GM12878 (cell line): ENCODE measurements at regions of chr17 and their contacts with region 1.

Region 1: DNA sequence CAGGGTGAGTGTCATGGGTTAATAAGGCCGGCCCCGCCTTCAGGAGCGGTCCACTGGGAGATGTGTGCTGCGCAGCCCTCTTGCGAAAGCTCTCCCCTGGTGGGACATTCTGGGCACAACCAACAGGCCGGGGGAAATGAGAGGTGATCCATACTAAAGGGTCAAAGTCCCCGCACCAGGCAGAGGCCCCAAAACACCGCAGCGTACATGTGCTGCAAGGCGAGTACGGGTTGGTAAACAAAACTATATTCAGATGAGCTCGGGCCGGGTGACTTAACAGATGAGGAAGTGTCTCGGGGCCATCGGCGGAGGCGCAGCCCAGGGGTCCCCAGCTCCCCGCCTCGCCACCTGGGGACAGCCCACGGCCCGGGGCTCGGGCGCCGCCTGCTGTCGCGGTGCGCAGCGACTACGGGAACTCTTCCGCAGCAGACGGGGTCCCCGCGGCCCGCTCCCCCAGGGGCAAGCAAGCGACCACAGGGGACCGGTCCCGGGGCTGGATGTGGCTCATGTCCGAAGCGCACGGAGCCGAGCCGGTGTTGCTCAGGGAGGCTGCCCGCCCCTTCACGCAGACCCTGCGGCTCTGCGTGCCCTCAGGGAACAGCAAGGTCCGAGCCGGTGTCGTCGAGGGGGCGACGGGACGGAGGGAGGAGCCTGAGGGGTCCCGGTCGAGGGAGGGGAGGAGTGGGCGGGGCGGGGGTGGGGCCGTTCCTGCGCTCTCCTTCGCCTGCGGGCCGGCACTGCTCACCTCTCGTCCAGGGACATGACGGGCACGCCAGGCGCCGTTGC is at the start of gene RAB37:
- DNase-seq: no peak
- ATAC-seq: peak; percentile 67
- H3K4me3 ChIP-seq: peak within 1 kb of the TSS; percentile 69
- H3K27ac ChIP-seq: peak within 1 kb of the TSS; percentile 47
- H3K4me1 ChIP-seq: peaks cover 32% of the 10 kb centered on the region
- H3K27me3 ChIP-seq: no peaks in the 10 kb centered on the region
- CTCF ChIP-seq: peak; percentile 64 to 76 (median 67); a peak in 5 of 6 replicates
- EP300 ChIP-seq: no peak
- POLR2A ChIP-seq: peak; percentile 31; the same call in 1 of the 2 replicates
- RAD21 ChIP-seq: peak; percentile 76
- polyA plus RNA-seq, gene RAB37: 0.48 to 0.97 TPM

Region 2: GRCh38 chr17:74566132-74566753 is 170.5 kb before region 1 on chr17:
- CTCF ChIA-PET with region 1: interaction called, 28 read pairs
- POLR2A ChIA-PET with region 1: no interaction called
- RAD21 ChIA-PET with region 1: interaction called, 5 read pairs
- SMC1A ChIA-PET with region 1: interaction called, 11 read pairs
- in situ Hi-C with region 1: no loop called
- intact Hi-C with region 1: loop called (anchors 2 kb)
- DNase-seq: no peak
- ATAC-seq: peak; percentile 86
- H3K4me3 ChIP-seq: no peak overlapping the region
- H3K27ac ChIP-seq: no peak overlapping the region
- H3K4me1 ChIP-seq: no peaks in the 10 kb centered on the region
- H3K27me3 ChIP-seq: peaks cover 1 to 3% of the 10 kb centered on the region in 2 experiments; a peak in 3 of 4 replicates
- CTCF ChIP-seq: peak; percentile 66 to 78 (median 74)
- EP300 ChIP-seq: no peak
- POLR2A ChIP-seq: no peak
- RAD21 ChIP-seq: peak; percentile 71

Region 3: DNA sequence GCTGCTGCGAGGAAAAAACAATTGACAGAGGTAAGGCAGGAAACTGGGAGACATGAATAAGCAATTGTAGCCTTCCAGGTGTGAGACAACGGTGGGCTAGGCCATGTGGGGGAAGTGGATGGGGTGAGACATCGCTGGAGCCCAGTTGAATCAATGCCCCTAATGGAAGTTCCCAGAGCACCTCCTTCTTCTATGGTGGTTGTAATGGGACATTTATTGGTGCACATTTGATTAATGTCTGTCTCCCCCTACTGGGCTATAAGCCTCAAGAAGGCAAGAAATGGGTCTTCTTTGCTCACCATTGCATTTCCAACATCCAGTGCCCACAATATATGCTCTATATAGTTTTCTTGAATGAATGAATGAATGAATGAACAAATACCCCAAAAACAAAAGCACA is 90.5 kb before region 1 on chr17:
- CTCF ChIA-PET with region 1: interaction called, 13 read pairs
- POLR2A ChIA-PET with region 1: interaction called, 6 read pairs
- RAD21 ChIA-PET with region 1: interaction called, 9 read pairs
- SMC1A ChIA-PET with region 1: interaction called, 5 read pairs
- in situ Hi-C with region 1: no loop called
- intact Hi-C with region 1: no loop called
- DNase-seq: no peak
- ATAC-seq: peak; percentile 59
- H3K4me3 ChIP-seq: no peak overlapping the region
- H3K27ac ChIP-seq: no peak overlapping the region
- H3K4me1 ChIP-seq: peaks cover 10% of the 10 kb centered on the region
- H3K27me3 ChIP-seq: peaks cover 0 to 5% of the 10 kb centered on the region in 2 experiments; a peak in 2 of 4 replicates
- CTCF ChIP-seq: peak; percentile 46 to 68 (median 50); a peak in 5 of 6 replicates
- EP300 ChIP-seq: no peak
- POLR2A ChIP-seq: no peak
- RAD21 ChIP-seq: peak; percentile 64

Region 4: GRCh38 chr17:74697515-74697914 is 39.2 kb before region 1 on chr17:
- CTCF ChIA-PET with region 1: interaction called, 6 read pairs
- POLR2A ChIA-PET with region 1: no interaction called
- RAD21 ChIA-PET with region 1: interaction called, 16 read pairs
- SMC1A ChIA-PET with region 1: interaction called, 5 read pairs
- in situ Hi-C with region 1: no loop called
- intact Hi-C with region 1: no loop called
- DNase-seq: peak; percentile 25
- ATAC-seq: peak; percentile 59
- H3K4me3 ChIP-seq: no peak overlapping the region
- H3K27ac ChIP-seq: peak overlapping the region; percentile 50
- H3K4me1 ChIP-seq: peaks cover 19% of the 10 kb centered on the region
- H3K27me3 ChIP-seq: no peaks in the 10 kb centered on the region; a peak in 1 of 4 replicates
- CTCF ChIP-seq: no peak
- EP300 ChIP-seq: no peak
- POLR2A ChIP-seq: no peak
- RAD21 ChIP-seq: no peak

Region 5: DNA sequence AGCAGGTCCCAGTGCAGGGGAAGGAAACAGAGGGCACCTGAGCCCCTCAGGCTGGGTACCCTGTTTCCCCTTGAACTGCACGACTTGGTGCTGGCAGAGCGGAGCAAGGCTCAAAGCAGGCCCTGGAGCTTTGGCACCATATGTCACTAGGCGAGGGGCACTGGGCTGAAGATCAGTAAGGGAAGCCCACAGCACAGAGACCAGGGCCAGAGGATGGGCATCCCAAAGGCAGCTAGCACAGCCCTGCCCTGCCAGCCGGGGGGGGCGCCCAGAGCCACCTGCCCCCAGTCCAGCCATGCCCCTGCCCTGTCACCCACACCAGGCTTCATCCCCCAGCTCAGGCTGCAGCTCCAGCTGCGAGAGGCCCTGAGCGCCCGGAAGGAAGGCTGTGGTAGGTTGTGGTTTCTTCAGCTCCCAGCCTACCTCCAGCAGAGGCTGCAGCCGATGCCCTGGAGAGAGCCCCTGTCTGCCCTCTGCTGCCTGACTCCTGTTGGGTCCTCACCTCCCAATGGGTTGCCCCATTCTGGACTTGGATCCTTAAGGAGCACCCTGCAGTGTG is 22.6 kb after region 1 on chr17:
- CTCF ChIA-PET with region 1: interaction called, 20 read pairs
- POLR2A ChIA-PET with region 1: interaction called, 3 read pairs
- RAD21 ChIA-PET with region 1: interaction called, 11 read pairs
- SMC1A ChIA-PET with region 1: interaction called, 12 read pairs
- in situ Hi-C with region 1: no loop called
- intact Hi-C with region 1: no loop called
- DNase-seq: no peak
- ATAC-seq: peak; percentile 90
- H3K4me3 ChIP-seq: no peak overlapping the region
- H3K27ac ChIP-seq: peak overlapping the region; percentile 1
- H3K4me1 ChIP-seq: peaks cover 21% of the 10 kb centered on the region
- H3K27me3 ChIP-seq: no peaks in the 10 kb centered on the region
- CTCF ChIP-seq: peak; percentile 16 to 32 (median 30); a peak in 3 of 6 replicates
- EP300 ChIP-seq: no peak
- POLR2A ChIP-seq: no peak
- RAD21 ChIP-seq: peak; percentile 28

Region 6: DNA sequence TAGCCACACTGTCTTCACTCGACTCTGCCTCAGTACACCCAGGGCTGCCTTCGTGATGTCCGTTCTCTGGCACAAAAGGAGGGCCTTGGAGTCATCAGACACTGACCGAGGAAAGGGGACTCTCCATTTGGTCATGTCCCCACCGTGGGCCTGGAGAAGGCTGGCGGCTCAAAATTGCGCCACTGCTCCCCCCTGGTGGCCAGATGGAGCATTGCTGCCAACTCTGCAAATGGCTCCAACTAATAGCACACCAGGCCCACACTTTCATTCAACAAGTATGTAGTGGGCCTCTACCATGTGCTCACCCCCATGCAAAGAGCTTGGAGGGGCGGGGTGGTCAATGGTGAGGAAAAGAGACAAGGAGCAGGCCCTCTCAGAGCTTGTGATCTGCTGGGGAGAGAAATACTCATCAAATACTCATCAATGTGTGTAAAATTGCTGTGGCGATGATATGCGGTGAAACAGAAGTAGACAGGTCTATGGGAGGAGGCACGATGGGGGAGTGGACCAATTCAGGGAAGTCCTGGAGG is 128.2 kb after region 1 on chr17:
- CTCF ChIA-PET with region 1: interaction called, 16 read pairs
- POLR2A ChIA-PET with region 1: interaction called, 4 read pairs
- RAD21 ChIA-PET with region 1: interaction called, 8 read pairs
- SMC1A ChIA-PET with region 1: interaction called, 5 read pairs
- in situ Hi-C with region 1: loop called (anchors 5 kb)
- intact Hi-C with region 1: no loop called
- DNase-seq: no peak
- ATAC-seq: peak; percentile 81
- H3K4me3 ChIP-seq: no peak overlapping the region
- H3K27ac ChIP-seq: no peak overlapping the region
- H3K4me1 ChIP-seq: peaks cover 4% of the 10 kb centered on the region; the same call in 1 of the 2 replicates
- H3K27me3 ChIP-seq: peaks cover 5 to 8% of the 10 kb centered on the region in 2 experiments
- CTCF ChIP-seq: peak; percentile 91 to 98 (median 97)
- EP300 ChIP-seq: no peak
- POLR2A ChIP-seq: no peak
- RAD21 ChIP-seq: peak; percentile 71